PC-9 (cell line): ENCODE measurements at regions of chr20 and their contacts with region 1.

Region 1: DNA sequence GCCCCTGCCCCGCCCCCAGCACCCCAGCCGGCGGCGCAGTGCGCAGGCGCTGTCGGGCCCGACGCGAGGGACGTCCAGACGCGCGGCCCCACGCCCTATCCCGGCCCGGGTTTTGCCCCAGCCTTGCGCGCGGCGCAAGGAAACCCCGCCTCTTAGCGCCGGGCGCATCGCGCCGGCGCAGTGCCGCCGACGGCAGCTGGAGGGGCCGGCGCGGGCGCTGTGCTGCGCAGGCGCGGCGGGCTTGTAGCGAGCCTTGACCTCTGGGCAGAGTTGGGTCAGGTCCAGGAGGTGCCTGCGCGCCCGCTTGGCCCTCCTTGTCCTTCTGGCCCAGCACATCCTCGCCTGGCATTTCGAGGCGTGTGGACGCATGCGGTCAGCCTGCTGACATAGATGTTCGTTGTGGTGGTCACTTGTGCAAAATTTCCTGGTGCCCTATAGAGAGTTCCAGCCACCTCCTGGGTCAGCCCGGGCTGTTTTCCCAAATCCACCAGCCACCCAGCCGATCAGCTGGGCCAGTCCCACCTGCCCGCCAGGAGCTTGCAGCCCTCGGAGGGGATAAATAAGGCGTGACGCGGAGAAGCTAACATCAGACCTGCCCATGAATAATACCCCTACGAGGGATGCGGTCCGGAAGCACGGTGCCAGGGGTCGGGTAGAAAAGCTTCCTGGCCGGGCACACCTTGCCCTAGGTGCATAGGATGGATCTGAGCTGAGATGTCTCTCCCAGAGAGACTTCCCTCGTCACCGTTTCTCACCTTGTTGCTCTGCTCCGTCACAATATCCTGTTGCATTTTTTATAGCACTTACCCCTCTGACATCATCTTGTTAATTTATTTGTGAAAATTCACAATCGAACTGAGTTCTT is 442 bp upstream of the PRELID3B start:
- DNase-seq: peak; percentile 82 to 98
- H3K4me3 ChIP-seq: peak overlapping the region; percentile 90
- H3K27ac ChIP-seq: peak overlapping the region; percentile 97
- H3K4me1 ChIP-seq: peaks cover 81% of the 10 kb centered on the region
- H3K27me3 ChIP-seq: no peaks in the 10 kb centered on the region
- CTCF ChIP-seq: no peak

Region 2: DNA sequence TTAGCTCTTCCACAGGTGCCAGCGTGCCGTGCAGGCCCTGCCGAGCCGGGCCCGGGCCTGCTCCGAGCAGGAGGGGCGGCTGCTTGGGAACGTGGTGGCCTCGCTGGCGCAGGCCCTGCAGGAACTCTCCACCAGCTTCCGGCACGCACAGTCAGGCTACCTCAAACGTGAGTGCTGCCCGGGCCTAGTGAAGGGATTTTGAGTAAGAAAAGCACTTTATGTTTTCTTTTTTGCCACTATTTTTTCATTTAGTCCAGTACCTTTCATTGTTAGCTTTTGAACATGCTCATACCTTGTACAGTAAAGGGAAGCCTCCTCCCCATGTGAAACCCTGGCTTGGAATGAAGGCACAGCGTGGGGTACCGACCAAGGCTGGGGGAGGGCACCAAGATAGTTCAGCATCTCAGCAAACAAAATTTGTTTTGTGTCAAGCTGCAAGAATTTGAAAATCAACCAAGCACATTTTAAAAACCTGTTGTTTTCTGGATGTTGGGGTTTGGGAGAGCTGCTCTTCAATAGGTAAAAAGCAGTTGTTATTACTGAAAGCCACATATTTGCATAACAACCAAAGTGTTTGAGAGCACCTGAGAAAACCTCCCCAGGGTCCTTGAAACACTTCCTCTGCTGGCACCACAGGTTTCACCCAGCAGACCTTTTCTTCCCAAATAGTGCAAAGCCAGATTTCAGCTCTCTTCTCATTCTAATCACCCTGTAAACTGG is 373.6 kb before region 1 on chr20:
- CTCF ChIA-PET with region 1: no interaction called
- POLR2A ChIA-PET with region 1: no interaction called
- intact Hi-C with region 1: no loop called
- DNase-seq: no peak
- H3K4me3 ChIP-seq: no peak overlapping the region
- H3K27ac ChIP-seq: no peak overlapping the region
- H3K4me1 ChIP-seq: no peaks in the 10 kb centered on the region
- H3K27me3 ChIP-seq: no peaks in the 10 kb centered on the region
- CTCF ChIP-seq: no peak

Region 3: GRCh38 chr20:58888521-58889333 is 154.3 kb before region 1 on chr20:
- CTCF ChIA-PET with region 1: no interaction called
- POLR2A ChIA-PET with region 1: interaction called, 3 read pairs
- intact Hi-C with region 1: loop called (anchors 2 kb)
- DNase-seq: peak; percentile 66 to 80
- H3K4me3 ChIP-seq: peak overlapping the region; percentile 55
- H3K27ac ChIP-seq: no peak overlapping the region; the same call in 1 of the 2 replicates
- H3K4me1 ChIP-seq: peaks cover 19% of the 10 kb centered on the region
- H3K27me3 ChIP-seq: no peaks in the 10 kb centered on the region
- CTCF ChIP-seq: no peak

Region 4: DNA sequence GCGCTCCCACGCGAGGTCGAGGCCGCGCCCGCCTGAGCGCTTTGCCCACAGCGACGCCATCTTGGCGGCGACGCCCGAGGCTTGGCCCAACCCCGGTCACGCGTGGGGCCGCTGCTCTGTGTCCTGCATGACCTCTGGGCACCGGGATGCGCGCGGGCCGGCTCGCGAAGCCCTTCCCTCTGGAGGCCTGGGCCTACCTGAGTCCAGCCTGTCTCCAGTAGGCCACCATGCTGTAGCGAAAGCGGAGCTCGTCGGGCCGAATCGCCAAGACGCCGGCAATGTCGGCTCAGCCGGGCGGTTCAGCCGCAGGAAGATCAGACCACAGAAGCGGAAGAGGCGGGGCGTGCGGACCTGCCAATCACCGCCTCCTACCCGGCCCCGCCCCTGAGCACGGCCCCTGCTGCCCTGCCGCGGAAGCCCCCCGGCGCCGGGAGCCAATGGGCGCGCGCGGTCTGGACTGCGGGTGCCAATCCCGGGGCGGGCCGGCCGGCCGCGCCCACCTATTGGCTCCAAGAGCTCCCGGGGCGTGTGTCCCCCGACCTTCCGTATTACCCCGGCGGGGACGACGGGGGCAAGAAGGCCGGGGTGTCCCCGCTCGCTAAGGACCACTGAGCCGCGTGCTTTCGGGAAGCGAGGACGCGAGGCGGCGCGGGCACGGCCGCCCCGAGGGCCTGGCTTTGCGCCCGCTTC is 10.9 kb before region 1 on chr20 and contains the start of gene ATP5F1E:
- CTCF ChIA-PET with region 1: no interaction called
- POLR2A ChIA-PET with region 1: interaction called, 10 read pairs
- intact Hi-C with region 1: no loop called
- DNase-seq: peak; percentile 90 to 98
- H3K4me3 ChIP-seq: peak within 1 kb of the TSS; percentile 80
- H3K27ac ChIP-seq: peak within 1 kb of the TSS; percentile 68
- H3K4me1 ChIP-seq: peaks cover 51% of the 10 kb centered on the region
- H3K27me3 ChIP-seq: no peaks in the 10 kb centered on the region
- CTCF ChIP-seq: no peak
- total RNA-seq, gene ATP5F1E: 76.3 and 84.8 TPM in 2 replicates

Region 5: DNA sequence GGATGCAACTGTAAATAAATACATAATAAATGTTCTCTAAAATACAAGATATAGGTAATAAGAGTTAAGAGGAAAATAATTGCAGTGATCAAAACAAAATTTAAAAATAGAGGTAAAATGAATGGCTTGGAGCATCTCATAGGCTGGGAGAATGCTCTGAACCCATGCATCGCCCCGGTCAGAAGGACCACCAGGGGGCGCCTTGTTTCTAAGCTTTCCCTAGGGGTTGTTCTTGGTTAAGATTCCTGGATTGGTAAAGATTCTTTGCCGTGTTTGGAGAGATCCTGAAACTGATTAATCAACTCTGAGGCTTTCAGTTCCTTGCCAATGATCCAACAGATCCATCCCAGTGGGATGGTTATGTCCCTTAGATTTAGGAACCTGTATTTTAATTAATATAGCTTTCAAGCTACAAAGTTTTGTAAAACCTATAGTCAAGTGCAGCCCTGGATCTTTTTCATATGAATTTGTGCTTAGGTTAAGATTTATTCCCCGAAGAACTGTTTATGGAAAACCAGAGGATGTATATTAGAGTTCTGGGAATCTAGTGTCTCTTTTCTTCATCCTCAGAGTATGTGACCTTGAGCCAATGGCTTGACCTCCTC is 44.9 kb after region 1 on chr20:
- CTCF ChIA-PET with region 1: no interaction called
- POLR2A ChIA-PET with region 1: no interaction called
- intact Hi-C with region 1: loop called (anchors 5 kb)
- DNase-seq: peak; percentile 48 to 70
- H3K4me3 ChIP-seq: no peak overlapping the region
- H3K27ac ChIP-seq: no peak overlapping the region
- H3K4me1 ChIP-seq: peaks cover 6% of the 10 kb centered on the region
- H3K27me3 ChIP-seq: no peaks in the 10 kb centered on the region
- CTCF ChIP-seq: peak; percentile 95